A549 (cell line): ENCODE measurements at regions of chr1 and their contacts with region 1.

Region 1: GRCh38 chr1:30718636-30719405 is 4.6 kb downstream of the MATN1 start:
- DNase-seq: peak; percentile 66 to 94
- ATAC-seq: peak; percentile 80 to 81
- H3K4me3 ChIP-seq: peak overlapping the region; percentile 62
- H3K27ac ChIP-seq: peak overlapping the region; percentile 92 to 97
- H3K4me1 ChIP-seq: peaks cover 5% of the 10 kb centered on the region; the same call in 2 of the 3 replicates
- CTCF ChIP-seq: peak; percentile 83
- EP300 ChIP-seq: no peak
- POLR2A ChIP-seq: peak; percentile 82
- RAD21 ChIP-seq: peak in 1 of 2 experiments; percentile 89; a peak in 3 of 5 replicates

Region 2: DNA sequence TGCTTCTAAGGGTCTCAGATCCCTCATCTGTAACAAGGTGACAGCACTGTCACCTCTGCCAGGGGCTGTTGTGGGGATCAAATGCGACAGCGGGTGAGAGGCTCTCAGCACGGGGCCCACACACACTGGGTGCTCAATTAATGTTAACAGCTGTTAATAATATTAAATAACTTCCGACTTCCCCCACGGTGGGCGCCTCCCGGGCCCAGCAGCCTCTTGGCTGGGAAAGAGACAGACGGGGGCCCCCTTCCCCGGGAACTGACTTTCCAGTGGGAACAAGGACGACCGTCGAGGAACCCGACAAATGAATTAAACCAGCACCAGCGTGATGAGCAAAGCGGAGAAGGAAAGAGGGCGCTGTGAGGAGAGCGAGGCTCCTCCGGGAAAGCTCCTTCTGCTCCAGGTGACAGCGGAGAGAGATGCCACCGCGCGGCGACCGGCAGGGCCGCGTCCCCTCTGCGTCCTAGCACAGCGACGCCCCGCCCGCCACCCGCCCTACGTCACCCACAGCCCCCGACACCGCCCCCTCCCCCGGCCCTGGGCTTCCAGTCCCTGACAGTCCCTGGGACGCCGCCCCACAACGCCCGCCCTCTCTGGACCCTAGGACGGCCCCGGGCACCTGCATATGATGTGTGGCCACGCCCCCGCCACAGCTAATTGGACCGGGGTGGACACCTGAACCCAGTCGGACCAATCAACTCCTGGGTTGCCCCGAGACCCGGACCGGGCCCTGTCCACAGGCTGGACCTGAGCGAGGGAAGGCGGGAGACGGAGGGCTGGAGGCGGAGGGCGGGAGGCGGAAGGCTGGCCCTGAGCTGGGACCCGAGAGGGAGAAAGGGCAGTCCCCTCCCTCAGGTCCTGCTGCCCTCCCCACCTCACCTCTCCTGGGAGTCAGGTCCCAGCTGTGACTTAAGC is 33.7 kb before region 1 on chr1:
- CTCF ChIA-PET with region 1: no interaction called
- POLR2A ChIA-PET with region 1: no interaction called
- DNase-seq: peak; percentile 17 to 43
- ATAC-seq: peak; percentile 58 to 89; a peak in 5 of 6 replicates
- H3K4me3 ChIP-seq: peak overlapping the region; percentile 31; the same call in 2 of the 3 replicates
- H3K27ac ChIP-seq: no peak overlapping the region
- H3K4me1 ChIP-seq: no peaks in the 10 kb centered on the region
- CTCF ChIP-seq: no peak
- EP300 ChIP-seq: no peak
- POLR2A ChIP-seq: no peak
- RAD21 ChIP-seq: no peak

Region 3: GRCh38 chr1:30902182-30902581 is 183.4 kb after region 1 on chr1:
- CTCF ChIA-PET with region 1: interaction called, 10 read pairs
- POLR2A ChIA-PET with region 1: no interaction called
- DNase-seq: no peak
- ATAC-seq: no peak; a peak in 1 of 6 replicates
- H3K4me3 ChIP-seq: no peak overlapping the region
- H3K27ac ChIP-seq: peak overlapping the region; percentile 50 to 79; a peak in 5 of 6 replicates
- H3K4me1 ChIP-seq: peaks cover 27% of the 10 kb centered on the region
- CTCF ChIP-seq: no peak
- EP300 ChIP-seq: no peak
- POLR2A ChIP-seq: no peak
- RAD21 ChIP-seq: no peak

Region 4: DNA sequence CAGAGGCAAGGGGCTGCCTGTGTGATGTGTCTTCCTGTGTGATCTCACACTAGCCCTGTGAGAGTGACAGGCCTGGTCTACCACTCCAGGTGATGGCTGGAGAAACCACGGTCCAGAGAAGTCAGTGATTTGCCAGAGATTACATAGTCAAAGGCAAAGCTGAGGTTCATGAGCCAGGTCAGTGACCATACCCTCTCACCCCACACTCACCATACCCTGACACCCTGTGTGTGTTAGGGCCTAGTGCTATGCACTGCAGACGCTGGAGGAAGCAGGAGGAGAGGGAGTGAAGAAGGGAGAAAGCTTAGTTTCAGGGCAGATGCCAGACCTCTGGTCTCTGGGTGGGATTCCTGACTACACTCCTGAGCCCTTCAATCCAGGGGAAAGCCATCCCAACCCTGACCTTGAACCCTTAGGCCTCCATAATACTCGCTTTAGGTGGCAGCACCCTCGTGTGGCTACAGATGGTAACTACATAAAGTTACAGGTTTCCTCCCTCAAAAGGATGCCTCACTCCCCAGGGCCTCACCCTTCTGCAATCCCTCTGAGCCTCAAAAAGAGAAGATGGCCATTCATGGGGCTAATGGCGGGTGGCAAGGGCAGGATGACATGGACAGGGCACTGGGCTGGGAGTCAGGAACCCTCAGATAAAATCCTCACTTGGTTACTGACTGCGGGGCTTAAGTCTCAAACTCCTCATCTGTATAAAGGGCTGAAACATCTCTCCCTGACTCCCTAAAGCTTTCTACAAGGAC is 210.5 kb after region 1 on chr1:
- CTCF ChIA-PET with region 1: interaction called, 15 read pairs
- POLR2A ChIA-PET with region 1: no interaction called
- DNase-seq: peak; percentile 37 to 40
- ATAC-seq: peak; percentile 78 to 79
- H3K4me3 ChIP-seq: no peak overlapping the region
- H3K27ac ChIP-seq: no peak overlapping the region
- H3K4me1 ChIP-seq: peaks cover 9% of the 10 kb centered on the region; the same call in 2 of the 3 replicates
- CTCF ChIP-seq: peak; percentile 55
- EP300 ChIP-seq: no peak
- POLR2A ChIP-seq: no peak
- RAD21 ChIP-seq: peak; percentile 51 to 67